Ascending aorta (tissue), 2 donors: ENCODE measurements at regions of chr1 and their contacts with region 1.

Region 1: DNA sequence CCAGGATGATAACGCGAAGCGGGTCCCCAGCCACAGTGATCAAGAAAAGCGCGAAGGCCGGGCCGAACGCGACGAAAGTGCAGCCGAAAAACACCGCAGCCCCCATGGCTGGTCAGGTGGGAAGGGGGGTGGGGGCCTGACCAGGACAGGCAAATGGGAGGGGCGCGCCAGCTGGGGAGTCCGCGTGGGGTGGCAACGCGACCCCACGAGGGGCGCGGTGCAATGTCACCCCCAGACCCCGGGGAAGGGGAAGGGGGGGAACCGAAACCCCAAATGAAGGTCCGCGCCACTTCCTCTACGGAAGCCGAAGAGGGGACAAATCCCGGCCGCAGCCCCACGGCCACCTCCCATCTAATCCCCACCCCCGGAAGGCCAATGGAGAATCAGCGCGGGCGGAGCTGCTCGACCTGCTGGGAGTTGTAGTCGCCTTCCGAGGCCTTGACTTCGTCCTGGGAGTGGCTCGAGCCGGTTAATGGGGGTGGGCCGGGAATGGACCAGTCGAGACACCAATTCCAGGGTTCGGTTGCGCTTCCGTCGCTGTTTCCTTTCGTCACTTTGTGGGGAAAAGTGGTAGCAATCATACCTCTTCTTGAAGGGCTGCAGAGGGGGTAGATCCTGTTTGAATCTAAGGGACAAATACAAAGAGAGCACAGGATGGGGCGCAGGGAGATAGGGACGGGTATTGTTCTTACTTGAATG is at the start of gene APH1A:
- DNase-seq: peak; percentile 92 to 99
- H3K4me3 ChIP-seq: peak within 1 kb of the TSS; percentile 86 to 87
- H3K27ac ChIP-seq: peak within 1 kb of the TSS; percentile 91
- H3K4me1 ChIP-seq: peaks cover 12 to 28% of the 10 kb centered on the region in 2 donors
- H3K27me3 ChIP-seq: no peaks in the 10 kb centered on the region
- CTCF ChIP-seq: no peak
- total RNA-seq, gene APH1A: 73.1 TPM

Region 2: GRCh38 chr1:150235852-150236613 is 32.8 kb before region 1 on chr1 and contains the start of gene ANP32E:
- intact Hi-C with region 1: loop called (anchors 2 kb)
- DNase-seq: peak; percentile 93 to 98
- H3K4me3 ChIP-seq: peak within 1 kb of the TSS; percentile 84 to 100
- H3K27ac ChIP-seq: peak within 1 kb of the TSS; percentile 97 to 100
- H3K4me1 ChIP-seq: peaks cover 0 to 10% of the 10 kb centered on the region in 2 donors
- H3K27me3 ChIP-seq: no peaks in the 10 kb centered on the region
- CTCF ChIP-seq: peak in 2 of 3 experiments; percentile 16 to 43
- total RNA-seq, gene ANP32E: 8.9 TPM

Region 3: GRCh38 chr1:150256554-150257341 is 12.1 kb before region 1 on chr1:
- intact Hi-C with region 1: loop called (anchors 1 kb)
- DNase-seq: no peak
- H3K4me3 ChIP-seq: peak overlapping the region in 1 of 2 donors; percentile 57
- H3K27ac ChIP-seq: no peak overlapping the region
- H3K4me1 ChIP-seq: peaks cover 0 to 9% of the 10 kb centered on the region in 2 donors
- H3K27me3 ChIP-seq: no peaks in the 10 kb centered on the region
- CTCF ChIP-seq: no peak